ENCODE measurements at regions of chr9 and their contacts with region 1.

Region 1: DNA sequence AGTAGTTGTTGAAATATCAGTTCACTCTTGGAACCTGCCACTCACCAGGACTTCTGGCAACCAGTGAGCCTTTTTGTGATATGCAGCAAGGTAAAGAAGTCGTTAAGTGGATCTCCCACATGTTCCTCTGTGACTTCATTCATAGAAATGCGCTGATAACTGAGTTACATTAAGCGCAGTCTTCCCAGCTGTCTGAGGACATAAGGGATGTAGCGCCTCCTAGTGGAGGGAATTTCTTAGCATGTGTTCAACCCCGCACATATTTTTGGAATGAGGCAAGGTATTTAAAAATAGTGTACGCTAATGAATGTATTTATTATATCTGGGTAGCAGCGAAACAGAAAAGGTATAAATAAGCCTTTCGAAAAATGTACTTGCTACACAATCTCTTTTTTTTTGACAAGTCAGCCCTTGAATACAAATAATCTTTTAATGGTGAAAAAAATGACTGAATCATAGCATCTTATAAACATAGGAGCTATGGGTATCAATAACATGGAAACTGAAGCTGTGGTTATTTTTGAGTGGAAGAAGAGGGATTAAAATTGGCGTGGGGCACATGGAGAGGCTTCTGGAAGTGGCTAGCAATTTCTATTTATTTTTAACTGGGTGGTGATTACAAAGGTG is 38.0 kb downstream of the PALM2AKAP2 start:
- DNase-seq: peak in 1 of 2 donors; percentile 55
- ATAC-seq: peak; percentile 88
- H3K4me3 ChIP-seq: no peak overlapping the region
- H3K27ac ChIP-seq: peak overlapping the region in 1 of 2 donors; percentile 89
- H3K4me1 ChIP-seq: peaks cover 0 to 7% of the 10 kb centered on the region in 2 donors
- H3K27me3 ChIP-seq: no peaks in the 10 kb centered on the region

Region 2: GRCh38 chr9:109579191-109579948 is 238.6 kb before region 1 on chr9:
- intact Hi-C with region 1: loop called (anchors 5 kb)
- DNase-seq: no peak
- ATAC-seq: no peak
- H3K4me3 ChIP-seq: no peak overlapping the region
- H3K27ac ChIP-seq: no peak overlapping the region
- H3K4me1 ChIP-seq: no peaks in the 10 kb centered on the region
- H3K27me3 ChIP-seq: no peaks in the 10 kb centered on the region

Region 3: DNA sequence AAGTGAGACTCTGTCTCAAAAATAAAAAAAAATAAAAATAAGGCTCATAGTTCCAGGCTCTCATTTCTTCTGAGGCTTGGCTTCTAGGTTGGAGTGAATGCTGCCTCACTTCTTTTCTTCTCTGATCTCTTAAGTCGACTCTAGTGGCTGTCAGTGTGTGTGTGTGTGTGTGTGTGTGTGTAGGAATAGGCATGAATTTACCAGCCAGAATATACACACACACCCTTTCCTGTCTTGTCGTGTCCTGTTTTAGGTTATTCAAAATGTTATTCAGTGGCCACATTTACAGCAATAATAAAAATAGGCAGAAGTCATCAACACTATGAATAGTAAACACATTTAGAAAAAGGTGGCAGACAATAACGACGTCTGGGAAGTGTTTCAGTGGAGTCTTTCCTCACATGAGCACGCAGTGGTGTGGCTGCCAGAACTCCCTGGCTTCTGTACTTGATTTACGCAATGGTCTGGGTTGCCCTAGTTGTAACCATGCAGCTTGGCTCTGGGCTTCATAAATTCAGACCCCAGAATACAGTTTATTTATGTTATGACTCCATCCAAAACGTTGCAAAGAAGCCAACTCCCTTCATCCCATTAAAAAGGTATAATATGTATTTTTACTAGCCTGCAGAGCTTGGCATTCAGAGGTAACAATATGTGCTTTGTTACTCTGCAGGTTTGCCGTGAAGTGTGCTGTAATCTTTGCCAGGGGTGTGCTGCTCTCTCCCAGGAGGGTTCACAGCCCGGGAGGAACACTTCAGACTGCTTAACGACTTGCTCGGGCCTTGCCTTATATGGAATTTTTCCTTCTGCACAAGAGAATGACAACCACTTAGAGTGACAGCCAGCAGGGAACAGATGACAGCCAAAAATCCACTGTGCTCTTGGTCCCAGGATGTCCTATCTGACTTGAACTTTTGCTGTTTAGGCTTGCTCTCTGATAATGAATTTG is 72.3 kb before region 1 on chr9:
- intact Hi-C with region 1: loop called in 1 of 2 experiments (anchors 5 kb)
- DNase-seq: peak; percentile 76 to 88
- ATAC-seq: peak; percentile 91
- H3K4me3 ChIP-seq: peak overlapping the region in 1 of 2 donors; percentile 10
- H3K27ac ChIP-seq: peak overlapping the region; percentile 43 to 60
- H3K4me1 ChIP-seq: peaks cover 12 to 15% of the 10 kb centered on the region in 2 donors
- H3K27me3 ChIP-seq: no peaks in the 10 kb centered on the region

Region 4: DNA sequence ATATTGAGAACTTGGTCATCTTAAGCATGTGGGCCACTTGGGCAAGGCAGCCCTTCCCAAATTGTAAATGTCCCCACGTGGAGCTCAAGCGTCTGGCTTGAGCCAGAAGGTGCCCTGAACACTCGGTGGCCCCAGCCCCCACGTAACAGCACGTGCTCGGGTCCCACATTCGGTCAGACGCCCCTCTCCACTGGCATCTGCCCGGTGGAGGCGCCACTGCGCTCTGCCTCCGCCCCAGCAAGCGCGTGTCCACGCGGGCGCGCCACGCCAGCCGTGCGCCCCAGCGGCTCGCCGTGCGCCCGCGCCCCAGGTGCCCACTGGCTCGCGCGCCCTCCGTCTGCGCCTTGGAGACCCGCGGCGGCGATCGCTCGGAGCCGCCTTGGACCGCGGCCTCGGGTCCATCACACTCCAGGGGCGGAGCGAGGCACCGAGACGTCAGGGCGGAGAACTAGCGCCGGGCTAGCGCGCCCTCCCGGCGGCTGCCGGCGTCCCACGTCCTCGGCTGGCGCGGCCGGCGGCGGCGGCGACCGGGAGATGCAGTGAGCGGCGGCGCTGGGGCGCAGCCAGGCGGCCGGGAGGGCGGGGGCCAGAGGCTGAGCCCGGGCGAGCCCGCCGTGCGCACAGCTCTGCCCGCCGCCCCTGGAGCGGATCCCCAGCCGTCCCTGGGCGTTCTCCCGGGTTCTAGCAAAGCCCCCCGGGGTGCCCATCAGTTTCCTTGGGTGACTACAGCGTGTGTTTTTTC is 38.1 kb before region 1 on chr9 and contains the start of gene PALM2AKAP2:
- intact Hi-C with region 1: loop called (anchors 5 kb)
- DNase-seq: peak; percentile 81 to 93
- ATAC-seq: peak; percentile 89
- H3K4me3 ChIP-seq: peak within 1 kb of the TSS; percentile 83 to 98
- H3K27ac ChIP-seq: peak within 1 kb of the TSS; percentile 32 to 81
- H3K4me1 ChIP-seq: peaks cover 0 to 15% of the 10 kb centered on the region in 2 donors
- H3K27me3 ChIP-seq: no peaks in the 10 kb centered on the region
- total RNA-seq, gene PALM2AKAP2: 58.1 to 155 TPM

Region 5: GRCh38 chr9:110029429-110029955 is 211.5 kb after region 1 on chr9:
- intact Hi-C with region 1: no loop called
- DNase-seq: no peak
- ATAC-seq: peak; percentile 76
- H3K4me3 ChIP-seq: no peak overlapping the region
- H3K27ac ChIP-seq: peak overlapping the region in 1 of 2 donors; percentile 54
- H3K4me1 ChIP-seq: peaks cover 4 to 16% of the 10 kb centered on the region in 2 donors
- H3K27me3 ChIP-seq: no peaks in the 10 kb centered on the region